Breast epithelium (tissue), 4 donors: ENCODE measurements at regions of chr6 and their contacts with region 1.

Region 1: GRCh38 chr6:34053721-34054120 is 92.2 kb downstream of the GRM4 start:
- DNase-seq: no peak
- H3K4me3 ChIP-seq: no peak overlapping the region
- H3K27ac ChIP-seq: no peak overlapping the region
- H3K4me1 ChIP-seq: no peaks in the 10 kb centered on the region
- H3K27me3 ChIP-seq: no peaks in the 10 kb centered on the region
- CTCF ChIP-seq: no peak
- POLR2A ChIP-seq: no peak

Region 2: GRCh38 chr6:34396518-34396917 is 342.8 kb after region 1 on chr6:
- intact Hi-C with region 1: loop called (anchors 5 kb)
- DNase-seq: no peak
- H3K4me3 ChIP-seq: no peak overlapping the region
- H3K27ac ChIP-seq: no peak overlapping the region
- H3K4me1 ChIP-seq: no peaks in the 10 kb centered on the region
- H3K27me3 ChIP-seq: no peaks in the 10 kb centered on the region
- CTCF ChIP-seq: no peak
- POLR2A ChIP-seq: no peak